Posterior cingulate gyrus (tissue), 11 donors: ENCODE measurements at regions of chr2 and their contacts with region 1.

Region 1: DNA sequence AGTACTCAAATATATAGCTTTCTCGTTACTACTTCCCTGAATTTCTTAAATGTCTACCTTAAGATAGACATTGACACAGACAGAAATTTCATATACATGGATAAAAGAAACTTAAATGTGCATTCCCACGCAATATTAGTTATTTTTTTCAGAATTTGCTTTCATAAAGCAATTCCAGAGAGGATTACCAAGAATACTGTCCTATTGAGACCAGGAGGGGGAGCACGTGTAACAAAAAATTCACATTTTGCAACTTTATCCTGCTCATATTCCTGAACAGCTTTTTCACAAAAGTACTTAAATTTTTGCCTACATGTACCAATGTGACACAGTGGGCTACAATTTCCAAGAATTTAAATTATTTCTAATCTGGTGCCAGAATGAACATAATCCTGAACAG is 30.7 kb upstream of the ERCC3 start:
- DNase-seq: peak in 1 of 10 donors; percentile 9

Region 2: DNA sequence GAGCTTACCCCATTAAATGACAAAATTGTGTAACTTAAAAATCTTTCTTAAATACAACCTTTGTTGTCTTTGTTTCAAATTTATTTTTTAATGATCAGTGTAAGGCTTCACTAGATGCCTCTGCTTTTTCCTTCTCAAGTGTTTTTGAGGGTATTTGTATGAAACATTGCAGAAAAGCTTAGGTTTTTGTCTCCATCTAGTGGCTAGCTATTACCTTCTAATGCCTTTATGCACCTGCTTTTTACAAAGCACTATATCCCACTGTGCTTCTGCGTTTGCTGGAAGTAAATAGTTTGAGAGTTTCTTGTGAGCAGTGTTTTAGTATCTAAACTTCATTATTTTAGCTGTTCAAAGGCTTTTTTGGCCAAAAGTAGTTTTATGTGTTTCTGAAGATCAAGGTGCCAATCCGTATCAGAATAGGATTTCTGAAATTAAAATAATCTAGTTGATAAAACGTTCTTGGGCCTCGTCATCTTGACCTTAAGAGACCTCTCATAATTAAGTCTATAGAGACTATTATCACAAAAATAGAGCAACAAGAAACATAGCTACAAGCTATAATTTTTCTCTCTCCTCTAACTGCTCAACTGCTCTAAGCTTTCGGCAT is 154.7 kb after region 1 on chr2:
- intact Hi-C with region 1: loop called (anchors 1 kb)
- DNase-seq: no peak

Region 3: DNA sequence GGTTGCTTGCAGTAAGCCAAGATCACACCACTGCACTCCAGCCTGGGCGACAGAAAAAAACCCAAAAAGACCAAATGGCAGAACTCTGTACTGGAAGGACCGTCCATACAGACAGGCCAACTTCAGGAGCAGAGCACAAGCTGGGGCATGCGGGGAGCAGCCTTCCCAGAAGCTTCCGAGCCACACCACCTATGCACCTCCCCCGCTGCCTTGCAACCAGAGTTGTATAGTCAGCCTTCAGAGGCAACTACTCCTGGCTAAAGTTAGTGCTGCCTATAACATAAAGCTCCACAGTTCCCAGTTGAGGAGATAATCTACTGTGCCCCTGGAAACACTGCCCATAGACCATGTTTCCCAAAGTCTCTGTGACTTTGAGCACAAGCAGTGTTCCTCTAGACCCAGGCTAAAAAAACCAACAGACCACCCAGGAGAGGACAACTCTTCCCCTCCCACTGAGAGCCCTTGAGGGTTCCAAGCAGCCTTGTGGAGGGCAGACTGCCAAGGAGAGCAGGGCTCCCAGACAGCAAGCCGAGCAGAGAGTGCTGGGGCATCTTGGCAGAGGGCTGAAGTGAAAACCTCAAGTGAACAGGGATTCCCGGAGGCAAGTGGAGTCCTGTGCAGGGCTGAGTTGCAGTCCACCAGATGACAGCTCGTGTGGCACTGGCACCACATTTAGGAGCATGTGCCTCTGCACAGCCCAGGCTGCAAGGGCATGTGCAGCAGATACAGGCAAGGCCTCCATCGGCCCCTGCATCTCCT is 383.4 kb after region 1 on chr2:
- intact Hi-C with region 1: no loop called
- DNase-seq: peak in 1 of 10 donors; percentile 25